ENCODE measurements at regions of chrX and their contacts with region 1.

Region 1: DNA sequence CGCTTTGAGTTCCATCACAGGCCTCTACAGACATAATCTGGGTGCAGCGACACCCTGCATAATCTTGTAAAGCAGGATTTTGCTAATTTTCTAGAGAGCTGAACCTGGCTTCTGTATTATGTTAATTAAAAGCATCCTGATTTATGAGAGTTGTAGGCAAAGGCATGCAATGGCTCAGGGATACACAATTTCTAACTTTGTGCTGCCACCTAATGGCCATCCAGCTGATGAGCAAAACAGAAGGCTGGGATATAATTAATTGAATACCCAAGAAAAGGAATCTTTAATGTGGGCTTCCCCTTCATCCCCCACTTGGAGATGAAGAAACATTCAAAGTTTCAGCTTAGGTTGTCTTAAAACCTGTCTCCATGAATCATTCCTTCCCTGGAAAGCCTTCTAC is 78.1 kb downstream of the BMP15 start:
- DNase-seq: peak; percentile 21
- H3K4me3 ChIP-seq: no peak overlapping the region
- H3K27ac ChIP-seq: no peak overlapping the region
- H3K4me1 ChIP-seq: no peaks in the 10 kb centered on the region
- H3K27me3 ChIP-seq: peaks cover 2 to 9% of the 10 kb centered on the region in 2 experiments
- CTCF ChIP-seq: peak; percentile 31 to 47
- POLR2A ChIP-seq: no peak

Region 2: DNA sequence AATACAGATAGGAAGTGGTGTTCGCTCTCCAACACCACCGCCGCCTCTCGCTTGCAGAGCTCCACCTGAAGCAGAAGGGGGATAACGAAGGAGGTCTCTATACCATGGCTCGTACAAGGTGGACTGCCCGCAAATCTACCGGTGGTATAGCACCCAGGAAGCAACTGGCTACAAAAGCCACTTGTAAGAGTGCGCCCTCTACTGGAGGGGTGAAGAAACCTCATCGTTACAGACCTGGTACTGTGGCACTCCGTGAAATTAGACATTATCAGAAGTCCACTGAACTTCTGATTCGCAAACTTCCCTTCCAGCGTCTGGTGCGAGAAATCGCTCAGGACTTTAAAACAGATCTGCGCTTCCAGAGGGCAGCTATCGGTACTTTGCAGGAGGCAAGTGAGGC is 83.3 kb before region 1 on chrX:
- CTCF ChIA-PET with region 1: no interaction called
- POLR2A ChIA-PET with region 1: no interaction called
- dilution Hi-C with region 1: no loop called
- intact Hi-C with region 1: loop called (anchors 5 kb)
- DNase-seq: no peak
- H3K4me3 ChIP-seq: no peak overlapping the region
- H3K27ac ChIP-seq: no peak overlapping the region
- H3K4me1 ChIP-seq: no peaks in the 10 kb centered on the region
- H3K27me3 ChIP-seq: peaks cover 0 to 2% of the 10 kb centered on the region in 2 experiments
- CTCF ChIP-seq: peak in 1 of 2 donors; percentile 5
- POLR2A ChIP-seq: no peak

Region 3: DNA sequence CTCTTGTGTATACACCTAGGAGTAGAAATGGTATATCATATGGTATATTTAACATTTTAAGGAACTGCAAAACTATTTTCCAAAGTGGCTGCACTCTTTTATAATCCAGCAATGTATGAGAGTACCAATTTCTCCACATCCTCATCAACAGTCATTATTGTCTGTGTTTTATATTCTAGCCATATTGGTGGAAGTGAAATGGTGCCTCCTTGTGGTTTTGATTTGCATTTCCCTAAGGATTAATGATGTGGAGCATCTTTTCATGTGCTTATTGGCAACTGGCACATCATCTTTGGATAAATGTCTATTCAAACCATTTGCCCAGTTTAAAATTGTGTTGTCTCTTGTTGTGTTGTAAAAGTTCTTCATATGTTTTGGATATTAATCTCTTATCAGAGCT is 68.5 kb before region 1 on chrX:
- CTCF ChIA-PET with region 1: interaction called, 3 read pairs
- POLR2A ChIA-PET with region 1: no interaction called
- dilution Hi-C with region 1: no loop called
- intact Hi-C with region 1: loop called (anchors 5 kb)
- DNase-seq: peak; percentile 46
- H3K4me3 ChIP-seq: no peak overlapping the region
- H3K27ac ChIP-seq: no peak overlapping the region
- H3K4me1 ChIP-seq: no peaks in the 10 kb centered on the region
- H3K27me3 ChIP-seq: no peaks in the 10 kb centered on the region
- CTCF ChIP-seq: peak in 1 of 2 donors; percentile 31
- POLR2A ChIP-seq: no peak